Activated T-helper 1 cell treated with anti-CD3 and anti-CD28 coated beads, Interleukin-12 subunit alpha, Interleukin-12 subunit beta, Interleukin-2, Interleukin-4 antibody, amounts not matched to agents 30 ng/mL and 10 ng/mL and 1 ng/mL, durations not matched to agents 14 hours and 24 hours and 36 hours (primary cell): ENCODE measurements at regions of chr6 and their contacts with region 1.

Region 1: GRCh38 chr6:13487122-13488014 is at the start of gene GFOD1:
- DNase-seq: peak; percentile 80
- H3K4me3 Mint-ChIP-seq: peak within 1 kb of the TSS; percentile 89
- H3K27ac Mint-ChIP-seq: peak within 1 kb of the TSS; percentile 72
- H3K4me1 Mint-ChIP-seq: peaks cover 39% of the 10 kb centered on the region
- H3K27me3 Mint-ChIP-seq: peaks cover 10% of the 10 kb centered on the region
- total RNA-seq, gene GFOD1: 12.4 and 13.6 TPM in 2 replicates

Region 2: DNA sequence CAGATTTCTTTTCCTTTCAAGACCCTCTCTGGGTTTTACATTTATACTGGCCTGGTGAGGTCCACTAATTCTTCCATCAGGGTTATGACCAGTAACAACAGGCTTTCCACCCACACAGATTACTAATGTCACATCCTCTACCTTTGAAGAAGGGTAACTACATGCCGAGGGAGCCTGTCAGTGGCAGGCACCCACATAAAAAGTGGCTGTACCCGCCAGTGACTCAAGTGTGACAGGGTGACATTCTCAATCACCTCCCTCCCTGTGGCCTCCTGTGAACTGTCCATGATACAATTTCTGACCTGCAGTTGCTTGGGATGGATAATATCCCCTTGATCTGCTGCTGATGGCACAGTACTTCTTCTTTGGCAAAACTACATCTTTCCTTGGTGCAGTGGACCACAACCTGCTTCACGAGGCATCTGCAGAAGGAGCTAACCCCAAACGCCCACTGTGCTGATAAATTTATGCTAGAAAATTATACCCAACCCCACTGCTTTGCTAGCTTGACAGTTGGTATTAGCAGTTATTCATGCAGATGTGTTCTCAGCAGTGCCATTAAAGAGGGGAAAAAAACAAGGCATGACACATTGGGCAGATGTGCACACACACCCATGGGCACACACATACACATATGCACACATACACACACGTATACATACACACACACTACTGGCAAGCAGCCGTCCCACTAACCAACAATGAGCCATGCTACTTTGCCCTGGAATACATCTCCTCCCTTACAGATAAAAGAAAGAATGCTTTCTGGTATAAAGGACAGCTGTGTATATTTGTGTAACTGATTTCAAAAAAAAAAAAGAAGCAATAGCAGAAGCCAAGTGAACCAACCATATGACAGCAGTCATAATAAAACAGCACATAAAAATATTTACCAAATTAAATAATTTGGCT is 20.8 kb before region 1 on chr6:
- intact Hi-C with region 1: loop called (anchors 1 kb)
- DNase-seq: no peak
- H3K4me3 Mint-ChIP-seq: no peak overlapping the region
- H3K27ac Mint-ChIP-seq: peak overlapping the region; percentile 85
- H3K4me1 Mint-ChIP-seq: peaks cover 46% of the 10 kb centered on the region
- H3K27me3 Mint-ChIP-seq: no peaks in the 10 kb centered on the region

Region 3: GRCh38 chr6:13614926-13615798 is 127.8 kb after region 1 on chr6 and contains the start of gene NOL7:
- intact Hi-C with region 1: loop called (anchors 1 kb)
- DNase-seq: peak; percentile 98
- H3K4me3 Mint-ChIP-seq: peak within 1 kb of the TSS; percentile 99
- H3K27ac Mint-ChIP-seq: peak within 1 kb of the TSS; percentile 87
- H3K4me1 Mint-ChIP-seq: peaks cover 54% of the 10 kb centered on the region
- H3K27me3 Mint-ChIP-seq: no peaks in the 10 kb centered on the region
- total RNA-seq, gene NOL7: 97.7 and 100 TPM in 2 replicates